Mammary epithelial cell (primary cell): ENCODE measurements at regions of chr14 and their contacts with region 1.

Region 1: DNA sequence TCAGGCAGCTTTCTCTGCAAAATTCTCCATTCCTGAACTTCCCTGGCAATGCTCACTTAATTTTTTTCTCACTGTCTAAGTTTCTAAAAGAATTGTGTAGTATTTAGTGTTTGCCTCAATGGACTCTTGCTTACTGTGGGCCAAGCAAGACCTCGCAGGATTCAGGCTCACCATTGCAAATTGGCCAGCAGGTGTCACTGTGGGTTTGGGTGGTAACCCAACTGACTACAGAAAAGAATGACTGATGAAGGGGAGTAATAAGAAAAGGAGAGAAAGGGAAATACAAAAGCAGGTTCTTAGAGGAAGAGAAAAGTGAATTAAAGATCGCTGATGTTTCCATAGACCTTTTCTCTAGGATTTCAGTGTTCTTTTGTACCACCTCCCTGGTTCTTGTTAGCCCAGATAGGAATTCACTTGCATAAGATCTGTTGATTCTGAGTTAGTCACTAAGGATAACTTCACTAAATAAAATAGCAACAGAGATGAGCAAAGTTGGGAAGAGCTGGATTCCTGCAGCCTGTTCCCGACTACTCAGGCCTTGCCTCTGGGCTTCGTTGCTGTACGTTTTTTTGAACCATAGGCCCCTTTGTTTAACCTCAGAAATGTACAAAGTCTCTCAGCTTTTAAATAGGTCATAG is 386.5 kb upstream of the DDHD1 start:
- DNase-seq: peak; percentile 55
- H3K4me3 ChIP-seq: no peak overlapping the region
- H3K27ac ChIP-seq: no peak overlapping the region
- H3K4me1 ChIP-seq: peaks cover 5% of the 10 kb centered on the region
- H3K27me3 ChIP-seq: no peaks in the 10 kb centered on the region
- CTCF ChIP-seq: peak; percentile 74 to 90

Region 2: GRCh38 chr14:53295985-53296582 is 243.5 kb before region 1 on chr14:
- CTCF ChIA-PET with region 1: no interaction called
- dilution Hi-C with region 1: no loop called
- in situ Hi-C with region 1: no loop called
- intact Hi-C with region 1: loop called (anchors 10 kb)
- DNase-seq: peak; percentile 19
- H3K4me3 ChIP-seq: no peak overlapping the region
- H3K27ac ChIP-seq: no peak overlapping the region
- H3K4me1 ChIP-seq: no peaks in the 10 kb centered on the region
- H3K27me3 ChIP-seq: no peaks in the 10 kb centered on the region
- CTCF ChIP-seq: peak; percentile 51

Region 3: DNA sequence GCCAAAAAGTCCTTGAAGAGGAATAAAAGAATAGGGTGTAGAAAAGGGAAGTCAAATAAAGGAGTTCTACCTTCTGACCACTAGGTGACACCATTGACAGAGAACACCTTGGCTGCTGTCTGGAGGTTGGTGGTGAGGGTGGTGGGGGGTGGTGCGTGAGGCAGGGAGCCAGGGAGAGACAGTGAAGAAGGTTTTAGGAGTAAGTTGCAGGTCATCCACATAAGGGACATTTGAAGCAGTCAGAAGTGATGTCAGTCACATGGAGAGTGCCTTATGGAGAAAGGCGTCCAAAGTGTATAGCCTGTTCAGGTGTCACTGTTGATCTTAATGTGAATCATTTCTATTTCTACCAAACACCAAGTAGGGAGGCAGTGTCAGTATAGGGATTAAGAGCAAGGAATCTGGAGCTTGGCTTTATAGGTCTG is 107.2 kb before region 1 on chr14:
- CTCF ChIA-PET with region 1: no interaction called
- dilution Hi-C with region 1: no loop called
- in situ Hi-C with region 1: no loop called
- intact Hi-C with region 1: loop called (anchors 1 kb)
- DNase-seq: peak; percentile 37
- H3K4me3 ChIP-seq: no peak overlapping the region
- H3K27ac ChIP-seq: no peak overlapping the region
- H3K4me1 ChIP-seq: no peaks in the 10 kb centered on the region
- H3K27me3 ChIP-seq: no peaks in the 10 kb centered on the region
- CTCF ChIP-seq: peak; percentile 81 to 85

Region 4: GRCh38 chr14:53929871-53930715 is 390.5 kb after region 1 on chr14:
- CTCF ChIA-PET with region 1: no interaction called
- dilution Hi-C with region 1: no loop called
- in situ Hi-C with region 1: no loop called
- intact Hi-C with region 1: loop called (anchors 5 kb)
- DNase-seq: peak; percentile 27
- H3K4me3 ChIP-seq: no peak overlapping the region
- H3K27ac ChIP-seq: no peak overlapping the region
- H3K4me1 ChIP-seq: peaks cover 11% of the 10 kb centered on the region
- H3K27me3 ChIP-seq: no peaks in the 10 kb centered on the region
- CTCF ChIP-seq: peak; percentile 63 to 68

Region 5: GRCh38 chr14:54025661-54026060 is 486.1 kb after region 1 on chr14:
- CTCF ChIA-PET with region 1: no interaction called
- dilution Hi-C with region 1: no loop called
- in situ Hi-C with region 1: no loop called
- intact Hi-C with region 1: loop called (anchors 1 kb)
- DNase-seq: peak; percentile 41
- H3K4me3 ChIP-seq: no peak overlapping the region
- H3K27ac ChIP-seq: no peak overlapping the region
- H3K4me1 ChIP-seq: no peaks in the 10 kb centered on the region
- H3K27me3 ChIP-seq: no peaks in the 10 kb centered on the region
- CTCF ChIP-seq: peak; percentile 60 to 62

Region 6: GRCh38 chr14:54175298-54175942 is 635.8 kb after region 1 on chr14:
- CTCF ChIA-PET with region 1: no interaction called
- dilution Hi-C with region 1: no loop called
- in situ Hi-C with region 1: loop called (anchors 25 kb)
- intact Hi-C with region 1: loop called (anchors 1 kb)
- DNase-seq: peak; percentile 65
- H3K4me3 ChIP-seq: no peak overlapping the region
- H3K27ac ChIP-seq: peak overlapping the region; percentile 8
- H3K4me1 ChIP-seq: peaks cover 20% of the 10 kb centered on the region
- H3K27me3 ChIP-seq: no peaks in the 10 kb centered on the region
- CTCF ChIP-seq: peak; percentile 71 to 82

Region 7: DNA sequence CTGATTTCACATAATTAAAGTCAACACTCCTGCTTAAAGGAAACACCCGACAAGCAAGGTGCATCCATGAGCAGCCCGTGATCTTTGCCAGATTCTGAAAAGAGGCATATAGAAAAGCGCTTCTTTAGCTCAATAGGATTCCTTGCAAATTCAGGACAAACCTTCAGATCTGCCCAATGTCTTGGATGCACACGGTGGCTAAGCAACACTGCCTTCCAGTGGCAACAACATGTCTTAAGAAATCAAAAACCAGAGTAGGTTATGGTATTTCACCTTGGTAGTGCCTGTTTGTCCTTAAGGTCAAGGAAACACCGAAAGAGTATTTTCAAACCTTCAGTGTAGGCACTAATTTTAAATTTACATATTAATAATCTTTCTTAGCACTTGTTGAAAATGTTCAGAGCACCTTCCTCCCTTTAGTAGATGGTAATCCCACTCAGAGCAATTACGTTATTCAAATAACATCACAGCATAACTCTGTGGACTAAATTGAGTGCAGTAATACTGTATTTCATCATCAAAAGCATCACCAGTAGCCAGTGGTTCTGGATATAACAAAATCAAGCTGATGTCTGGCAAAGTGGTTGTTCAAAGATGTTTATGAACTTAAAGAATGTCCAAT is 799.2 kb after region 1 on chr14:
- CTCF ChIA-PET with region 1: interaction called, 5 read pairs
- dilution Hi-C with region 1: no loop called
- in situ Hi-C with region 1: loop called (anchors 10 kb)
- intact Hi-C with region 1: loop called (anchors 1 kb)
- DNase-seq: peak; percentile 37
- H3K4me3 ChIP-seq: no peak overlapping the region
- H3K27ac ChIP-seq: no peak overlapping the region
- H3K4me1 ChIP-seq: no peaks in the 10 kb centered on the region
- H3K27me3 ChIP-seq: no peaks in the 10 kb centered on the region
- CTCF ChIP-seq: peak; percentile 77 to 78